ENCODE measurements at regions of chr16 and their contacts with region 1.

Region 1: GRCh38 chr16:56643080-56643778 is 4.8 kb downstream of the MT1A start:
- DNase-seq: peak; percentile 89 to 93
- ATAC-seq: peak; percentile 89
- H3K4me3 ChIP-seq: no peak overlapping the region
- H3K27ac ChIP-seq: peak overlapping the region in 1 of 2 donors; percentile 15
- H3K4me1 ChIP-seq: no peaks in the 10 kb centered on the region
- H3K27me3 ChIP-seq: no peaks in the 10 kb centered on the region

Region 2: DNA sequence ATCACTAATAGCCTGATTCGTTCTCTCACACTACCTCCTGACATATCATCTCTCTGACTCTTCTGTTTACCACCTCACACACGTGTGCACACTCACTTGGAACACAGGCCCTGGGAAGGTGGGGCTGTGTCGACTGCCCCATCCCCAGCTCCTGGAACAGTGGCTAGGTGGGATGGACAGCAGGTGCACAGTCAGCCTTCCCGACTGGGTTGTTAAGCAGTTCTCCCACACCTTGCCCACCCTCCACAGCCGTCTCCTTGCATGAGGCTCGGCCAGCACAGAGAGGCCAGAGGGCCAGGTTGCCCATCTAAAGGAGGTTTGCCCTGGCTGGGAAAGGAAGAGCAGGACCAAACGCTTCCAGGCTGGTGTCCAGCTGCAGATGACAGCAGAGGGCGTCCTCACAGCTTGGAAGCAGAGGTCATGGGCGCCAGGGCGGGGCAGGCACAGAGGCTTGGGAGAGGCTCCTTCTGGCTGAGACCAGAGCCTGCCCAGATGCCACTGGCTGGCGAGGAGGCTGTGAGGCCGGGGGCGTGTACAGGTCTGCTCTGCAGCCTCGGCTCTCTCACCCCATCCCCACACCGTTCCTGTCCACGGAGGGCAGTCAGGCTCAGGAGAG is 310.7 kb before region 1 on chr16:
- intact Hi-C with region 1: no loop called
- DNase-seq: peak in 1 of 2 donors; percentile 70
- ATAC-seq: peak; percentile 6
- H3K4me3 ChIP-seq: no peak overlapping the region
- H3K27ac ChIP-seq: no peak overlapping the region
- H3K4me1 ChIP-seq: no peaks in the 10 kb centered on the region
- H3K27me3 ChIP-seq: no peaks in the 10 kb centered on the region

Region 3: DNA sequence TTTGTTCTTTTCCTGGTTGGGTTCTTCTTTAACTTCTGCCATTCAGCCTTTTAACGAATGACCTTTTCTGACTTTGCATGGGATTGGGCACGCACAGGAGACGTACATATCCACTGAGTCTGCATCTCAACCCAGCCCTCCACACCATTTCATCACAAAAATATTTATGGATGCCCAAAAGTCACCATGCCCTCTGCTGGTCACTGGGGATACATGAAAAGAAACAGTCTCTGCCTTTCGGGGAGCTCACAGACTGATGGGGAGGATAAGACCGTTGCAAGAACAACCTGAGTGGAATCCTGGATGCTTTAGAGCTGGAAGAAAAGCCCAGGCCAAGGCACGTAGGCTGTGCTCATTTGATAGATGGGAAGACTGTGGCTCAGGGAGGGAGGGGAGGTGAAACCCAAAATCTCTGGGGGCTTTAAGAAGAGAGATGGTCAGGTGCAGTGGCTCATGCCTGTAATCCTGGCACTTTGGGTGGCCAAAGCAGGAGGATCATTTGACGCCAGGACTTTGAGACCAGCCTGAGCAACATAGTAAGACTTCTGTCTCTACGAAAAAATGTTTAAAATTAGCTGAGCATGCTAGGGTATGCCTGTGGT is 42.7 kb before region 1 on chr16:
- intact Hi-C with region 1: loop called (anchors 2 to 5 kb)
- DNase-seq: no peak
- ATAC-seq: peak; percentile 57
- H3K4me3 ChIP-seq: no peak overlapping the region
- H3K27ac ChIP-seq: no peak overlapping the region
- H3K4me1 ChIP-seq: no peaks in the 10 kb centered on the region
- H3K27me3 ChIP-seq: no peaks in the 10 kb centered on the region

Region 4: GRCh38 chr16:56681939-56682702 is 38.9 kb after region 1 on chr16 and contains the start of gene MT1X:
- intact Hi-C with region 1: loop called in 1 of 2 experiments (anchors 5 kb)
- DNase-seq: peak; percentile 96 to 97
- ATAC-seq: peak; percentile 98
- H3K4me3 ChIP-seq: peak within 1 kb of the TSS; percentile 55 to 66
- H3K27ac ChIP-seq: peak within 1 kb of the TSS in 1 of 2 donors; percentile 48
- H3K4me1 ChIP-seq: no peaks in the 10 kb centered on the region
- H3K27me3 ChIP-seq: no peaks in the 10 kb centered on the region
- total RNA-seq, gene MT1X: 62.0 to 559 TPM